ENCODE measurements at regions of chr2 and their contacts with region 1.

Region 1: DNA sequence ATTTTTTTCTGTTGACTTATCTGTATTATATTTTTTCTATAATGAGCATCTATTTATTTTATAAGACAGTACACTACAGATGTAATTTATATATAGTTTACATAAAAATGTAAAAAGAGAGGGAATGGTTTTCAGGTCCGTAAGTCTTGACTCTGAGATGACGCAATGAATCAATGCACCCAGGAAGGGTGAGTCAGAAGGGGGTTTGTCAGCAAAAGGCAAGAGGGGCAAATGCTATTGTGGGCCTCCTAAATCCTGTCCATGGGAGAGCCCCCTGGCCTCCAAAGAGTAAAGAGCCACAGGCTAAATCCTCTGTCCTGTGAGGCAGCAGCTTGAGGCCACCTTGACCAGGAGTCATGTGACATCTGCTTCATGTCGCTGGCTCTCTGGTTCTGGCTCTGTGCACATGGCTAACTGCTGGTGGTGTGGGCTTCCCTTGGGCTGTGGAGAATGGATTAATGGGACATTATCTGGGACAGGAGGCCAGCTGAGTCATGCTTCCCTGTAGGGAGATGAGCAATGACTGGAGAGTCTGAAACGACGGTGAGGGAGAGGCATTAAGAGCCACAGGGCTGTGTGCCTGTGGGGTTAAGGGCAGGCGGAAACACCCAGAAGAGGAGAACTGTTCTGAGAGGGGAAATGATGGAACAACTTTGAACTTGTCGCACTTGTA is 22.8 kb upstream of the ASB18 start:
- DNase-seq: no peak
- H3K4me3 ChIP-seq: no peak overlapping the region
- H3K4me1 ChIP-seq: no peaks in the 10 kb centered on the region
- H3K27me3 ChIP-seq: 0 out of 2 replicates have a peak, but pooled peaks cover 2% of the 10 kb centered on the region

Region 2: GRCh38 chr2:236195726-236196125 is 91.3 kb before region 1 on chr2:
- in situ Hi-C with region 1: no loop called
- DNase-seq: no peak
- H3K4me3 ChIP-seq: no peak overlapping the region
- H3K4me1 ChIP-seq: no peaks in the 10 kb centered on the region
- H3K27me3 ChIP-seq: no peaks in the 10 kb centered on the region

Region 3: DNA sequence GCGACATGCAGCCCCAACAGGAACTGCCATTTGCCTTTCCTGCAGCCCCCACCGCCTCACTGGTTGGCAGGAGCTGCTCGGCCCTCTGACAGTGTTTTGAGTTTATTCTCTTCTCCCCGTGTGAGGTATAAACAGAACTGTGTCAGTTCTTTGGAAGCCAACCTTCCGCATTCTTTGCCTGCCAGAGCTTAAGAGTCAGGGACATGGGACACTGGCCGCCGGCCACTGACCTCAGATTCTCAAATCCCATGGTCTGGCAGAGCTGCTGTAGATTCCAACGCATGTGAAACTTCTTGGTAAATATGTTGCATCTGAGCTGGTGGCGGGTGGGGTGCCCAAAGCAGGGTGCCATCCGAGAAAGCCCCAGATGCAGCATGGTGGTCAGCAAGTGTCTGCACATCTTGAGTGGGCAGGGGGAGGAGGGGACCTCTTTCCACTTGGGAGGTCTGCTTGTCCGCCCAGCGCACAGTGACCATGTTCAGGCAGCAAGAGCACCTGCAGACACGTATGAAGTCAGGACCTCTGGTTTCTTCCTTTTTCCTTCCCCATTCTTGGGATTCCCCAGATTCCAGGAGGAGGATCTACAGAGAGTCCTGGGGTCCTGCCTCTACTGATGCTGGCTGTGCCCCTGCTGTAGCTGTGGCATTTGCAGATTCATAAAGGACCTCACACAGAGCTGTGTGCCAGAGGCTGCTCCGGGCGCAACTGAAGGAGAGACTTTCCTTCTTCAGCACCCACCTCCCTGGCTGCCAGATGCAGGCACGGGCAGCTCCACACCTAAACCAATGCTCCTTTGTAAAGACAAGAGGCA is 46.6 kb before region 1 on chr2:
- in situ Hi-C with region 1: loop called (anchors 5 kb)
- DNase-seq: no peak
- H3K4me3 ChIP-seq: no peak overlapping the region
- H3K4me1 ChIP-seq: no peaks in the 10 kb centered on the region
- H3K27me3 ChIP-seq: peaks cover 6% of the 10 kb centered on the region; the same call in 1 of the 2 replicates

Region 4: DNA sequence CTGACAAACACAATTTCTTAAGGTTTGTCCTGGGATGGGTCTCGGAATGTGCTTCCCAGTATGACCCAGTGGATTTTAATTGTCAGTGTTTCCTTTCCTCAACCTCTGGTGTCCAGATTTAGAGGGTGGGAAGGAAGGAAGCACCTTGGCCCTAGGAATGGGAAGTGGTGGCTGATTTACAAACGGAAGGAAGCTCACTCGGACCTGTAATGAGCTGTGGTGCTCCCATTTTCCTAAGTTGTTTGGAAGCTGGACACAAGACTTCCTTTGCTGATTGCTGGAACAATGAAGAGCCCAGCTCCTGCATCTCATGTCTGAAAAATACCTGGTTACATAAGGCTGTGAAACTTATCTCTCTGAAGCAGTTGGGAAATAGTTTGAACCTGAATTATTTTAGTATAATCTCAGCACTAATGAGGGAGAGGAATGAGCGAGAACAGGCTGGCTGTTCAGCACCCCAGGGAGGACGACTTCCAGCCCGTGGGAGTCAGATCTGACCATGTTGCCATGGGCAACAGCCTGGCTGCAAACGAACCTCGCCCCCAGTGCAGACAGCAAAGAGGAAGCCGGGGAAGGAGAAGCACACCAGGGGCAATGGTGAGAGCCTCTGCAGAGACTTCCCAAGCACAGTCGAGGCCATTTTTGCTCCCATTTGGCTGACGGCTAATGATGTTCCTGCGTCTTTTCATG is 51.6 kb after region 1 on chr2:
- in situ Hi-C with region 1: no loop called
- DNase-seq: no peak
- H3K4me3 ChIP-seq: no peak overlapping the region
- H3K4me1 ChIP-seq: no peaks in the 10 kb centered on the region
- H3K27me3 ChIP-seq: no peaks in the 10 kb centered on the region; the same call in 1 of the 2 replicates

Measured in HAP-1 (cell line).